ENCODE measurements at regions of chr11 and their contacts with region 1.

Region 1: DNA sequence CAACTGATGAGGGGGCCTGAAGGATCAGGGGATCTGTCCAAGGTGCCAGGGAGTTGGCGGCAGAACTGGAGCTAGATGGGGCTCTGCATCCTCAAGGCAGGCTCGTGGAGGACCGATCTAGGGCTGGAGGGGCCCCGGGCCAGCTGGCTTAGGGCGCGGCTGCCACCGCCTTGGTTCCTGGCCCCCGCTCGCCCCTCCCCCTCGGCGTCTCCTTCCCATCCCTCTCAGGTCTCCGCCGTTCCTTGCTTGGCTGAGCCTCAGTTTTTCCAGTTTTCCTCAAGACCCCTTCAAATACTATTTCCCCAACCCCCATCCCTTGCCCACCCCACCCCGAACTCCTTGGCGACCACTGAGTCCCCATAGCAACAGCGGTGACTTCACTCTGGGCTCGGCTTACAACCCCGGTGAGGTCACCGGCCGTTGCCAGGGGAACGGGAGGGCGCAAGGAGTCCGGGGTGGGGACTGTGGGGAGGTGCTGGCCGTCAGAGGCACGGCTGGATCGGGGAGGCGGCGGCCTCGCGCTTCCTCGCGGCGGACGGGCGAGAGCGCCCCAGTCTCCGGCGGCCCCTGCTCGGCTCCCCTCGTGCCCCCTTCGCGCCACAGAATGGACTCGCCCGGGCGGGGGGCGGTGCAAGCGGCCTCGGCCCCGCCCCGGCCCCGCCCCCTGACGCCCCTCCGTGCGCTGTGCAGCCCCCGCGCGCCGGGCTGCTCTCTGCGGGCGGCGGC is 7.5 kb downstream of the FREY1 start:
- DNase-seq: peak; percentile 94
- H3K4me3 ChIP-seq: peak overlapping the region; percentile 26 to 64 (median 58)
- H3K27ac ChIP-seq: peak overlapping the region; percentile 63 to 70 (median 68)
- H3K4me1 ChIP-seq: peaks cover 0 to 26% (median 22%) of the 10 kb centered on the region in 4 donors
- H3K27me3 ChIP-seq: peaks cover 0 to 6% (median 5%) of the 10 kb centered on the region in 3 donors
- CTCF ChIP-seq: no peak
- EP300 ChIP-seq: no peak
- POLR2A ChIP-seq: no peak

Region 2: GRCh38 chr11:45859661-45860140 is 39.9 kb before region 1 on chr11:
- intact Hi-C with region 1: loop called (anchors 5 kb)
- DNase-seq: peak; percentile 99
- H3K4me3 ChIP-seq: no peak overlapping the region
- H3K27ac ChIP-seq: peak overlapping the region; percentile 81 to 99 (median 88)
- H3K4me1 ChIP-seq: peaks cover 0 to 69% (median 67%) of the 10 kb centered on the region in 4 donors
- H3K27me3 ChIP-seq: no peaks in the 10 kb centered on the region
- CTCF ChIP-seq: no peak
- EP300 ChIP-seq: peak; percentile 67 to 96 (median 88)
- POLR2A ChIP-seq: no peak

Region 3: GRCh38 chr11:45879803-45880686 is 19.6 kb before region 1 on chr11:
- intact Hi-C with region 1: loop called (anchors 1 kb)
- DNase-seq: no peak
- H3K4me3 ChIP-seq: no peak overlapping the region
- H3K27ac ChIP-seq: peak overlapping the region; percentile 5 to 74 (median 48)
- H3K4me1 ChIP-seq: peaks cover 0 to 29% (median 27%) of the 10 kb centered on the region in 4 donors
- H3K27me3 ChIP-seq: no peaks in the 10 kb centered on the region
- CTCF ChIP-seq: no peak
- EP300 ChIP-seq: peak in 1 of 4 donors; percentile 39
- POLR2A ChIP-seq: no peak

Region 4: DNA sequence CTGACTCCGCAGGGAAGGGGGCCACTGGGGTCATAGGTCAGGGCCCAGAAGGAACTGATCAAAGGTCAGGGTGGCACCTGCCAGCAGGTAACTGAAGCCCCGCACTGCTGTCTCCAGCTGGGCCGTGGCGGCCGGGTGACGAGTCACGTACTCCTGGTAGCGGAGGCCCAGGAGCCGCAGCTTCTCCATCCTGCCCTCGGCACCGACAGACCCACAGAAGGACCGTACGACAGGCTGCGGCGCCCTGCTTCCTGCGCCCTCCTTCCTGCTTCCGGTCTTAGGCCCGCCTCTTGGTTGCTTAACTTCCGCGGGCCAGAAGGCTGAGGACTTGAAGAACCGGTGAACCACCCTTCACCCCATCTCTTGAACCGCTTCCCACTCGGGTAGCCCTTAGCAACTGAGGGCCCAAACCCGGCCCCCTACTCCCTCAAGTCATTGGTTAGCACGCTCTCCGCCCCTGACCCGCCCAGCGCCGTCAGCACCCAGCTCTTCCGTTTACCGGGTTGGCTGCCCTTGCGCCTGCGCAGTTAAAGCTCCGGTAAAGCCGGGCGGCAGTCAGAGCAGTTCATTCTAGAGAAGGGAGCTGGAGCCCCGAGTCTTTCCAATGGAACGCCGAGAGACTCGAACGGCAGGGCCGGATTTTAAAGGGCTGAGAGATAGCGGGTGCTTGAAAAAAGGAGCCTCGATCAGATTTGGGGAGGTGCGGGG is 18.2 kb after region 1 on chr11 and contains the start of gene PEX16:
- intact Hi-C with region 1: loop called (anchors 2 kb)
- DNase-seq: peak; percentile 99
- H3K4me3 ChIP-seq: peak within 1 kb of the TSS; percentile 81 to 96 (median 86)
- H3K27ac ChIP-seq: peak within 1 kb of the TSS; percentile 90 to 92 (median 91)
- H3K4me1 ChIP-seq: peaks cover 0 to 31% (median 26%) of the 10 kb centered on the region in 4 donors
- H3K27me3 ChIP-seq: peaks cover 8 to 16% (median 13%) of the 10 kb centered on the region in 3 donors
- CTCF ChIP-seq: no peak
- EP300 ChIP-seq: peak in 1 of 4 donors; percentile 24
- POLR2A ChIP-seq: peak; percentile 63 to 75
- total RNA-seq, gene PEX16: 13.8 to 28.2 (median 21.6) TPM

Measured in sigmoid colon (tissue), 7 donors.